Lower leg skin (tissue), 4 donors: ENCODE measurements at regions of chr14 and their contacts with region 1.

Region 1: GRCh38 chr14:47154276-47154797 is 502.8 kb upstream of the RPL10L start:
- DNase-seq: no peak
- H3K4me3 ChIP-seq: no peak overlapping the region
- CTCF ChIP-seq: no peak
- POLR2A ChIP-seq: no peak

Region 2: DNA sequence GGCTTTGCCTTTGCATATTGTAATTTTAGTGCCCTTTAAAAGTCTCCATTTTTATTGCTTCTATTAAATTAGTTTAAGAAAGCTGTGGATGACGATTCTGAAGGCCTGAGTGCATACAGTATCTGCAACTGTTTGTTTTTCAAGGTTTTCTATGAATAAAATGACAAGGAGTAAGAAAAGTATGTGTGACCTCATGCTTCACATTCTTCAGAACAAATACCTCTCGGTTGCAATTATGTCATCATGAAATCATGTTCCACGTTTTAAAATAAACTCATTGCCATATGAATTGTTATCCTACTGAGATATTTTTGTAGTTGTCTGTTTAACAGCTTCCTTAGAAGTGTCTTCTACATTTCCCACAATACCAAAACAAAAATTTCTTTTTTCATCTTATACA is 146.5 kb after region 1 on chr14:
- intact Hi-C with region 1: no loop called
- DNase-seq: no peak
- H3K4me3 ChIP-seq: no peak overlapping the region
- CTCF ChIP-seq: no peak
- POLR2A ChIP-seq: no peak

Region 3: DNA sequence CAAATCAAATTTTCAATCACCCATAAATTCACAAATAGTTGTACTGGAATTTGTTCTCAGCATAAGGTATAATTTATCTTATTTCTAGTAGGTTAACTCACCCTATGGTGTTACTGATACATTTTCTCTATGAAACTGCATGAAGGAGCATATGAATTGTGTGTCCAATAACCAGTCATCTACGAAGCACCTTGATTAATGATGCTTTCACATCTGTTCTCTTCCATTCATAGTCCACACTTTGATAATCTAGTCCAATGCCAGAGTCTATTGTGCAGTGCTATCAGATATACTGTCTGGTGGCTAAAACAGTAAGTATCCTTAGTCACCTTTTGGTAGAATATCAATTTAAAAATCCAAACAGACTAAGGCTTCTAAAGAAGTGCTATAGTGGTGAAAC is 1555.8 kb after region 1 on chr14:
- intact Hi-C with region 1: loop called (anchors 10 kb)
- DNase-seq: no peak
- H3K4me3 ChIP-seq: no peak overlapping the region
- CTCF ChIP-seq: no peak
- POLR2A ChIP-seq: no peak